Naive thymus-derived CD4-positive, alpha-beta T cell (primary cell): ENCODE measurements at regions of chr5 and their contacts with region 1.

Region 1: GRCh38 chr5:147188200-147189108 is 46.4 kb upstream of the STK32A start:
- DNase-seq: peak in 7 of 9 donors; percentile 32 to 63 (median 50)
- ATAC-seq: peak; percentile 79
- H3K4me3 ChIP-seq: no peak overlapping the region
- H3K4me3 Mint-ChIP-seq: peak overlapping the region in 4 of 10 donors; percentile 27 to 58 (median 41)
- H3K27ac ChIP-seq: no peak overlapping the region
- H3K27ac Mint-ChIP-seq: peak overlapping the region in 1 of 9 donors; percentile 15
- H3K4me1 ChIP-seq: no peaks in the 10 kb centered on the region
- H3K4me1 Mint-ChIP-seq: peaks cover 0 to 8% (median 5%) of the 10 kb centered on the region in 7 donors
- H3K27me3 ChIP-seq: no peaks in the 10 kb centered on the region
- H3K27me3 Mint-ChIP-seq: peaks cover 5 to 15% (median 8%) of the 10 kb centered on the region in 5 donors

Region 2: GRCh38 chr5:146533260-146533857 is 655.1 kb before region 1 on chr5:
- CTCF ChIA-PET with region 1: interaction called, 4 read pairs
- POLR2A ChIA-PET with region 1: no interaction called
- intact Hi-C with region 1: loop called (anchors 1 kb)
- DNase-seq: peak; percentile 24 to 72 (median 62)
- ATAC-seq: peak; percentile 91
- H3K4me3 ChIP-seq: no peak overlapping the region
- H3K4me3 Mint-ChIP-seq: no peak overlapping the region
- H3K27ac ChIP-seq: no peak overlapping the region
- H3K27ac Mint-ChIP-seq: peak overlapping the region in 3 of 9 donors; percentile 0 to 23 (median 6)
- H3K4me1 ChIP-seq: no peaks in the 10 kb centered on the region
- H3K4me1 Mint-ChIP-seq: peaks cover 4 to 10% (median 5%) of the 10 kb centered on the region in 7 donors
- H3K27me3 ChIP-seq: no peaks in the 10 kb centered on the region
- H3K27me3 Mint-ChIP-seq: peaks cover 0 to 5% (median 0%) of the 10 kb centered on the region in 5 donors

Region 3: DNA sequence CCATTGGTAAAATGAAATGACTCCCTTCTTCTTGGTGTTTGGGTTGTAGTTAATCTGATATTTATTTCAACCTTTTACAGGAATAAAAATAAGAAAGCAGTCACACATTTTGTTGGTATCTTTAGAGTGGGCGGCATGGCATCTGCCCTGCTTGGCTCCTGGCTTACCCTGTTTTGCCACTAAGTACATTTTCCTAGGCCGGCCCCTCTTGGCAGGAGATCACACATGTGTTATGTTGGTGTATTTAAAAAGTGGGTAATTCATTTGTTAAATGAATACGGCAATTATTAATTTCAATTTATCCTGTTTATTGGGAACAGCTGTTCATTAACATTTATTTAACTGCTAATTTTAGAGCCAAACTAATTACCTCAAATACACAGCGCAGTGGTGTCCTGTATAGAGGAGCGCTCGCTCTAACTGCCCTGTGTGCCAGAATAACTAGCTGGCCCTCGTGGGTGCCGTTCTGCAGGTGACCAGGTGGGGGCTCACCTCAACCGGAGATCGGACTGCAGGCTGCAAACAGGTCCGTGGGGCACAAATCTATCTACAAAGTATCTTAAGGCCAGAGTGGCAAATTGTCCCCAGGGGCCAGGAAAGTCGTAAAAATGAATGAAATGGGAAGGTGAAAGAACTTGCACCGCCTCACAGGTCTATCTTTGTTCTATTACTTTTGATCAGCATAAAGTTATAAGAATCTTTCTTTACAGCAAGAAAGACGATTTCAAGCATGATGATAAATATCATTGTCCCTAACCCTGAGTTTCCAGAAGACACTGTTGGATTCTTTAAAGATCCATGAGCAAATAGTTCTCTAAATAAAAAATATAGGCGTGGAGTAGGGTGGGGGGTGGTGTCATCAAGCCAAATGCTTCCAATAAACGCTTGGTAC is 646.2 kb before region 1 on chr5:
- CTCF ChIA-PET with region 1: interaction called, 10 read pairs
- POLR2A ChIA-PET with region 1: no interaction called
- intact Hi-C with region 1: loop called in 1 of 2 experiments (anchors 1 kb)
- DNase-seq: peak; percentile 23 to 72 (median 51)
- ATAC-seq: peak; percentile 86
- H3K4me3 ChIP-seq: no peak overlapping the region
- H3K4me3 Mint-ChIP-seq: no peak overlapping the region
- H3K27ac ChIP-seq: no peak overlapping the region
- H3K27ac Mint-ChIP-seq: no peak overlapping the region
- H3K4me1 ChIP-seq: no peaks in the 10 kb centered on the region
- H3K4me1 Mint-ChIP-seq: peaks cover 0 to 5% (median 0%) of the 10 kb centered on the region in 7 donors
- H3K27me3 ChIP-seq: no peaks in the 10 kb centered on the region
- H3K27me3 Mint-ChIP-seq: peaks cover 0 to 4% (median 0%) of the 10 kb centered on the region in 5 donors

Region 4: GRCh38 chr5:146662229-146662628 is 526.2 kb before region 1 on chr5:
- CTCF ChIA-PET with region 1: no interaction called
- POLR2A ChIA-PET with region 1: no interaction called
- intact Hi-C with region 1: loop called in 1 of 2 experiments (anchors 1 kb)
- DNase-seq: peak in 6 of 9 donors; percentile 2 to 53 (median 39)
- ATAC-seq: no peak
- H3K4me3 ChIP-seq: no peak overlapping the region
- H3K4me3 Mint-ChIP-seq: no peak overlapping the region
- H3K27ac ChIP-seq: no peak overlapping the region
- H3K27ac Mint-ChIP-seq: no peak overlapping the region
- H3K4me1 ChIP-seq: no peaks in the 10 kb centered on the region
- H3K4me1 Mint-ChIP-seq: peaks cover 0 to 16% (median 4%) of the 10 kb centered on the region in 7 donors
- H3K27me3 ChIP-seq: no peaks in the 10 kb centered on the region
- H3K27me3 Mint-ChIP-seq: peaks cover 0 to 1% (median 0%) of the 10 kb centered on the region in 5 donors

Region 5: DNA sequence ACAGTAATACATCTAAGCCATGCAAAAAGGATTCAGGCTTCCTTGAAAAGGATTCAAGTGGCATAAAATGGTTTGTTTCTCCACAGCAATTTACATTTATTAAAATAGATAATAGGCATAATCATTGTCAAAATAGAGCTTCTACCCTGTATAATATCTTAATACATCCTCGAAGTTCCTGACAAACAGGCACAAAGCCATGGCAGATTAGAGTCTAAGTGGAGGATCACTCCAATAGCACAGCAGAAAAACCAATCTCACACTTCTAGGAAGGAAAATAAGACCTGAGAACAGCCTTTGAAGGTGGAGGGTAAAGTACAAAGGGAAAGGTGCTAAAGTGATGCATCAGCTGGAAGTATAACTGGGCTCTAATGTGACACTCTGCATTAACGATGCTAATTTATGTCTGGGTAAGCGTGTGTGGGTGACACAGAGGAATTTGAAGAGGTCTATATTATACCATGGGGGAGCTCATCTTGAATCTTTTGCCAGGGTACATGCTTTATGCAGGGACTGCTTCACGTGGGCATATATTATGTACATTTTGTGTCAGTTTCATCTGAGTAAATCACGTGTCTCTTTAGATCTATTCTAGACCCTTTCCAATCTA is 338.7 kb before region 1 on chr5:
- CTCF ChIA-PET with region 1: no interaction called
- POLR2A ChIA-PET with region 1: no interaction called
- intact Hi-C with region 1: no loop called
- DNase-seq: no peak
- ATAC-seq: no peak
- H3K4me3 ChIP-seq: no peak overlapping the region
- H3K4me3 Mint-ChIP-seq: no peak overlapping the region
- H3K27ac ChIP-seq: no peak overlapping the region
- H3K27ac Mint-ChIP-seq: no peak overlapping the region
- H3K4me1 ChIP-seq: no peaks in the 10 kb centered on the region
- H3K4me1 Mint-ChIP-seq: peaks cover 0 to 8% (median 0%) of the 10 kb centered on the region in 7 donors
- H3K27me3 ChIP-seq: no peaks in the 10 kb centered on the region
- H3K27me3 Mint-ChIP-seq: peaks cover 0 to 5% (median 0%) of the 10 kb centered on the region in 5 donors

Region 6: DNA sequence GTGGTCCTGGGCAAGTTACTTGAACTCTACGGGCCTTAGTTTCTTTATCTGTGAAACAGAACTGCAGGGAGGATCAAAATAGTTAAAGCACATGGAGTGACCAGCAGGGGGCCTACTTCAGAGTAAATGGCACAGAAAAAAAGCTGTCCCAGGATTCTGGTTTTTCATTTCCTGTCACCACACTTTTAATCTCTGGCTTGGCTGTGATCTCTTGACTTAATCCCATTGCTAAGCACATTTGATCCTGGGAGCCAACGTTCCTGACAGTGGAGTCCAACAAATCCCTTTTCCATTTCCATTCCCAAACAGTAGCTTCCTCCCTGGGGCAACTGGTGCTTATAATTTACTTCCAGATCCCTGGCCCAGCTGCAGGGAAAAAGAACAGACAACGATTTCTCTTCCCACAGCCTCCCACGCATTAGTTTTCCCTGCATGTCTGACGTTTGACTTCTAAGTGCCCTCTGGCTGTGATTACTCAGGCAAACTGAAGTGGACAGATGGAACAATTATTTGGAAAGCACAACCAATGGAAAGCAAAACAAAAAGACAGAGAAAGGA is 90.1 kb before region 1 on chr5:
- CTCF ChIA-PET with region 1: interaction called, 4 read pairs
- POLR2A ChIA-PET with region 1: no interaction called
- intact Hi-C with region 1: loop called (anchors 1 to 2 kb)
- DNase-seq: no peak
- ATAC-seq: no peak
- H3K4me3 ChIP-seq: no peak overlapping the region
- H3K4me3 Mint-ChIP-seq: no peak overlapping the region
- H3K27ac ChIP-seq: no peak overlapping the region
- H3K27ac Mint-ChIP-seq: no peak overlapping the region
- H3K4me1 ChIP-seq: no peaks in the 10 kb centered on the region
- H3K4me1 Mint-ChIP-seq: peaks cover 0 to 2% (median 0%) of the 10 kb centered on the region in 7 donors
- H3K27me3 ChIP-seq: peaks cover 0 to 3% of the 10 kb centered on the region in 2 donors
- H3K27me3 Mint-ChIP-seq: peaks cover 0 to 13% (median 0%) of the 10 kb centered on the region in 5 donors

Region 7: DNA sequence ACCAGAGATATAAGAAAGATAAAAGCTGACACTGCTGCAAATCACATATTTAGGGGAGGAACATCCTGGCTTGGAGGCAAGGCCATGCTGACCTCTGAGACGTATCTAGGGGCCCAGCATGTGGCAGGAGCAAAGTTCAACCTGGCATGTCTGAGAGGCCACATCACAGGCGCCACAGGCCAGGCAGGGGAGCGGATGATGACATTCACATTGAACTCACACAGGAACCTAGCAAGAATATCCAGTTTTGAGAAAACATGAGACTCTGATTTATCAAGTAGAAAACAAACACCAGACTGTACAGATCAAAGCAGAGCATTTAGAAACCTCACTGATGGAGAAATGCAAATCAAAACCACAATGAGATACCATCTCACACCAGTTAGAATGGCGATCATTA is 17.9 kb before region 1 on chr5:
- CTCF ChIA-PET with region 1: no interaction called
- POLR2A ChIA-PET with region 1: no interaction called
- intact Hi-C with region 1: no loop called
- DNase-seq: no peak
- ATAC-seq: no peak
- H3K4me3 ChIP-seq: no peak overlapping the region
- H3K4me3 Mint-ChIP-seq: no peak overlapping the region
- H3K27ac ChIP-seq: no peak overlapping the region
- H3K27ac Mint-ChIP-seq: no peak overlapping the region
- H3K4me1 ChIP-seq: no peaks in the 10 kb centered on the region
- H3K4me1 Mint-ChIP-seq: no peaks in the 10 kb centered on the region
- H3K27me3 ChIP-seq: no peaks in the 10 kb centered on the region
- H3K27me3 Mint-ChIP-seq: peaks cover 0 to 11% (median 8%) of the 10 kb centered on the region in 5 donors